ENCODE measurements at regions of chr2 and their contacts with region 1.

Region 1: GRCh38 chr2:56132138-56132537 is 51.7 kb upstream of the CCDC85A start:
- DNase-seq: peak; percentile 63
- H3K4me3 ChIP-seq: no peak overlapping the region
- H3K27ac ChIP-seq: no peak overlapping the region
- H3K4me1 ChIP-seq: peaks cover 6% of the 10 kb centered on the region
- H3K27me3 ChIP-seq: no peaks in the 10 kb centered on the region
- CTCF ChIP-seq: peak; percentile 63

Region 2: DNA sequence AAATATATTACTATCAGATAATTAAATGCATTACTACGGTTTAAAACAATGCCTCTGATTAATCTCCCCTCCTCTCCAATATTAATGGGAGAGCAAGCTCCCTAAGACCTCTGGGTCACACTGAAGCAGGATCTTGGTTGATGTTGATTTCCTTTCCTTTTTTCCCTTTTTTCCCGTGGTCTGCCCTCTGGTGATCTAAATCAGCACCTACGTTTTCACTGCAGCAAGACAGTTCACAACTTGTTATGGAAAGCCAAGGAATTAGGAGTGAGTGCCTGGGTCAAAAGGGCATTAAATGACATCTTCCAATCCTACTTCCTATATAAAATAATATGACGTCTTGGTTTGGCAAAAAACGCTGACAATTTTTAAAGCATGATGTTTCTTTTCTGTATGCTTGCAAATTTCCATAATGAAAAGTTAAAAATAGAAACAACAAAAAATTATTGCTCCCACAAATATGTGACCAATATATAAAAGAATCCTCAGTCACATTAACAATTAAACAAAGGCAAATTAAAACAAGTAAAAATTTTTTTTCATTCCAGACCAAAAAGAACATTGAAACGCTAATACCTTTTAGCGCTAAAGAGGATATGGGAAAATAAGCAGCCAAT is 620.5 kb before region 1 on chr2:
- CTCF ChIA-PET with region 1: no interaction called
- POLR2A ChIA-PET with region 1: no interaction called
- intact Hi-C with region 1: no loop called
- DNase-seq: peak; percentile 64
- H3K4me3 ChIP-seq: no peak overlapping the region
- H3K27ac ChIP-seq: no peak overlapping the region
- H3K4me1 ChIP-seq: no peaks in the 10 kb centered on the region
- H3K27me3 ChIP-seq: no peaks in the 10 kb centered on the region
- CTCF ChIP-seq: peak; percentile 66

Region 3: DNA sequence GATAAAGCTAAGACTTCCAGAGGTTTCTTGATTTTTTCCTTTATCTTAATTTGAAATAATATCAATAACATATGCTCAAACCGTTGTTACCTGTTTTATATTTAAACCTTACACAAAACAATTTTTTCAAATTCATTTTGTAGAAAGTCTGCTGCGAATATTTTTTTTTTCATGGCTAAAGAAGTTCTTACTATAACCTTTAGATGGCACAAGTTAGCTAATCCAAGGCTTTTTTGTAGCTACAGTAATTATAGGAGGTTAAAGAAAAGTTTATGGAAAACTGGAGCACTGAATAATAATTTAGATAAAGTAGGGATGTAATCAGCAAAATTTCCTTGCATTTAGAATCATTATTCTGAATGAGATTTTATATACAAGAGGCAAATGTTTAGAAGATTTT is 360.5 kb before region 1 on chr2:
- CTCF ChIA-PET with region 1: interaction called, 4 read pairs
- POLR2A ChIA-PET with region 1: no interaction called
- intact Hi-C with region 1: loop called (anchors 10 kb)
- DNase-seq: peak; percentile 53
- H3K4me3 ChIP-seq: no peak overlapping the region
- H3K27ac ChIP-seq: no peak overlapping the region
- H3K4me1 ChIP-seq: no peaks in the 10 kb centered on the region
- H3K27me3 ChIP-seq: peaks cover 42% of the 10 kb centered on the region
- CTCF ChIP-seq: peak; percentile 71

Region 4: DNA sequence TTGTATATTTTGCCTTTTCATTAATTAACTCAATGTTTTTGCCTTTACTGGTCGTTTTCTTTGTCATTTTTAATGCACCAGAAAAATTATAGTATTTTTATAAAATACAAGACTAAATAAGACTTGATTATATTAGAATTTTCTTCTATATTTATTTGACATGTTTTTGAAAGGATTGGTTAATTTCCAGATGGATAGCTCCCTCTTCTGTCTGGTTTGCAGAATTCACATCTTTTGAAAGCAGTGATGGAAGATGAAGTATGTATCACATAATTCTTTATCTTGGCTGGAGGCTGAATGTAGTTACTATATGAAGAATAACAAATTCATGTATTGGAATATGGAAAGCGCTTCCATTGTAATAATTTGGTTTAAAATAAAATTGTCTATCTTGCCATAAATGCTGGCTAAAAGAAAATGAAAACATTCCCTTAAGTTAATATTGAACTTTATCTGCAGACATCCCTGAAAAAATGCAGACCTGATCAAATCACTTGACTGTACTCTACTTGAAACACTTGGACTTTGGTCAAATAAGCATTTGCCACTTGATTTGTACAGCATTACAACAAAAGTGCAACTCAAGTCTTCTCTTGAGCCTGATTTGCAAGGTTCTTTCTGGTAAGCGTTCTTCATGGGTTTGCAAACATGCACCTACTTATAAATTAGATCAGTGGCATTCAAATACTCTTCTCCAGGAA is 122.2 kb before region 1 on chr2:
- CTCF ChIA-PET with region 1: no interaction called
- POLR2A ChIA-PET with region 1: no interaction called
- intact Hi-C with region 1: no loop called
- DNase-seq: peak; percentile 51
- H3K4me3 ChIP-seq: no peak overlapping the region
- H3K27ac ChIP-seq: no peak overlapping the region
- H3K4me1 ChIP-seq: peaks cover 5% of the 10 kb centered on the region
- H3K27me3 ChIP-seq: peaks cover 14% of the 10 kb centered on the region
- CTCF ChIP-seq: peak; percentile 71

Region 5: DNA sequence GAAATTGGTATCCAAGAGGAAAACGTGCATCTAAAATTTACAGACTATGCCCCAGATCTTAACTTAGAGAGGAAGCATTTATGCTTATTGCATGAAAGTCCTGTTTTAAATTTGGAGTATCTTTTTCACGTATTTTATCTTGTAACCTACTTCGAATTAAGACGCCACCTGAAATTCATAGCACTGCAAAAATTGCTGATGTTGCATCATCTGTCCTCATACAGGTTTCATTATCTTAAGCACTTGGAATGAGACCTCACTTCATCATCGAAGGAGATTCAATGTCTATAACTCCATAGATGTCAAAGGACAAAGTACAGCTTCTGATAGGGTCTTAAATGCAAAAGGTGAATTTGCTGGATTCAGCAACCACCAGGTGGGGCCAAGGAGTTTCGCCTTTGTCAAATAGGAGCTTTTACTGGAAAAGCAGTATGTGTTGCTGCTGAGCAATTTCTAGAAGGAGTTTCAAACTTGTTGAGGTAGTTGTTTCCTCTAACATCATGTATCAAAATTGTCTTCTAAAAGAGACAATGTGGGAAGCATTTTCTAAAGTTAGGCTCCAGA is 54.7 kb before region 1 on chr2:
- CTCF ChIA-PET with region 1: interaction called, 3 read pairs
- POLR2A ChIA-PET with region 1: no interaction called
- intact Hi-C with region 1: loop called (anchors 5 kb)
- DNase-seq: peak; percentile 11
- H3K4me3 ChIP-seq: no peak overlapping the region
- H3K27ac ChIP-seq: no peak overlapping the region
- H3K4me1 ChIP-seq: no peaks in the 10 kb centered on the region
- H3K27me3 ChIP-seq: peaks cover 17% of the 10 kb centered on the region
- CTCF ChIP-seq: peak; percentile 55

Region 6: GRCh38 chr2:56102866-56103265 is 29.3 kb before region 1 on chr2:
- CTCF ChIA-PET with region 1: no interaction called
- POLR2A ChIA-PET with region 1: no interaction called
- intact Hi-C with region 1: no loop called
- DNase-seq: no peak
- H3K4me3 ChIP-seq: no peak overlapping the region
- H3K27ac ChIP-seq: no peak overlapping the region
- H3K4me1 ChIP-seq: no peaks in the 10 kb centered on the region
- H3K27me3 ChIP-seq: peaks cover 15% of the 10 kb centered on the region
- CTCF ChIP-seq: no peak

Region 7: DNA sequence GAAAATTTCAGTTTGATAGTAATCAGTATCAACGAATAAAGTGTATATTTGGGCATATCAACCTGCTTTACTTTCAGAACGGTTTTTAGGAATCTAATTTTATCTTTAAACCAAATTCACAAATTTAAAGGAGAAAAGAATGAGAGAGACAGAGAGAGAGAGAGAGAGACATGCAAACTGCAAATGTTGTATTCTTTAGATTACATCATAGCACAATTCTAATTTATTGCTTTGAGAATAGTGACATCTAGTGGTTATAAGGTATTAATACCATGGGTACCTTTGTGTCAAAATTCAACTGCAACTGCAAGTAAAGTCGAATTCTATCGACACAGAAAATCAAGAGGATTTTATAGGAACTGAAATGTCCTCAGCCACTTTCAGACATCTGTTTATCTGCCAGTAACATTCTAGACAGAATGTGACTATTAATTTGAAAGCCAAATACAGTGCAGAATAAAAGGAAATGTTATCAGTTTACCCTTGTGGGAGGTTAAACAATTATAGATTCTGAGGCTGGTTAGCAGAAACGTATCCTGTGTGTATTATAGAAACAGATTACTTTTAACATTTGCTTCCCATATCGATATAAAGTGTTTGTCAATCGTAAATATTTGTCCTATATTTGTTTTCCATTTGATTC is 1384.7 kb after region 1 on chr2:
- CTCF ChIA-PET with region 1: no interaction called
- POLR2A ChIA-PET with region 1: no interaction called
- intact Hi-C with region 1: loop called (anchors 5 kb)
- DNase-seq: peak; percentile 74
- H3K4me3 ChIP-seq: no peak overlapping the region
- H3K27ac ChIP-seq: no peak overlapping the region
- H3K4me1 ChIP-seq: peaks cover 8% of the 10 kb centered on the region
- H3K27me3 ChIP-seq: no peaks in the 10 kb centered on the region
- CTCF ChIP-seq: peak; percentile 63